CD8-positive, alpha-beta T cell (primary cell): ENCODE measurements at regions of chr7 and their contacts with region 1.

Region 1: DNA sequence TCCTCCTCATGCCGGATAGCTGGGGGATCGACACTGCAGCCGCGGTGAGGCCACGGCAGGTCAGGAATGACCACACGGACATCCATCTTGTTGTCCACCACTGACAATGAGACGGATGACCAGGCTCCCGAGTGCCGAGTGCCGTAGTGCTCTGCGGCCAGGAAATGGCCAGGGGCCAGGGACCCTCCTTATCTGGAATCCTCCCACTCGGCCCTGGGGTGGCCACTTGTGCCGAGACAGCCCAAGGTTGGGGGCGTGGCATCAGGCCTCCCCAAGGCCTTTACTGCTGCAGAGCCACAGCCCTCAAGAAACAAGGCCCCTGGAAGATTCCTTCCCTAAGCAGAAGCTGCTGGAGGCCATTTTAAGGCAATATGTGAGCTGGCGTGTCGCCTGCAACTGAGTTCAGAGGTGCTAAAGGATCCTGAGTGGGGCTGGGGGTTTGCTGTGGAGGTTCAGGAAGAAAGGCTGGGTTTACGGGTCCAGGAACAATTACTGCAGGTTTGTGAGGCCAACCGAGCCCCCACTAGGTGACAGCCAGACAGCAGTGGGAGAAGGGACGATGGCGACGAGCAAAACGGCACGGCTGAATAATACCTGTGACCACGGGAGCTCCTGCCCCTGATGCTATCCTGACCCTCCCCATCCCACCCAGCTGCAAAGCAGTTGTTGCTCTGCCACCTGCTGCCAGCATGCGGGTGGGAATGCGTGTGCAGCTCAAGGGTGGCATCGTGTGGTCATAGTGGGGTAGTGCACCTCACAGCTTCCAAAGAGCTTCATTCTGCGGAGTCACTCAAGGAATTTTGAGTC is 31.6 kb upstream of the LEP start:
- DNase-seq: peak; percentile 45 to 84 (median 65)
- ATAC-seq: peak; percentile 98
- H3K4me3 ChIP-seq: no peak overlapping the region
- H3K4me3 Mint-ChIP-seq: no peak overlapping the region
- H3K27ac ChIP-seq: no peak overlapping the region
- H3K27ac Mint-ChIP-seq: no peak overlapping the region
- H3K4me1 ChIP-seq: no peaks in the 10 kb centered on the region
- H3K4me1 Mint-ChIP-seq: no peaks in the 10 kb centered on the region
- H3K27me3 ChIP-seq: no peaks in the 10 kb centered on the region
- H3K27me3 Mint-ChIP-seq: peaks cover 14% of the 10 kb centered on the region
- CTCF ChIP-seq: peak; percentile 93

Region 2: DNA sequence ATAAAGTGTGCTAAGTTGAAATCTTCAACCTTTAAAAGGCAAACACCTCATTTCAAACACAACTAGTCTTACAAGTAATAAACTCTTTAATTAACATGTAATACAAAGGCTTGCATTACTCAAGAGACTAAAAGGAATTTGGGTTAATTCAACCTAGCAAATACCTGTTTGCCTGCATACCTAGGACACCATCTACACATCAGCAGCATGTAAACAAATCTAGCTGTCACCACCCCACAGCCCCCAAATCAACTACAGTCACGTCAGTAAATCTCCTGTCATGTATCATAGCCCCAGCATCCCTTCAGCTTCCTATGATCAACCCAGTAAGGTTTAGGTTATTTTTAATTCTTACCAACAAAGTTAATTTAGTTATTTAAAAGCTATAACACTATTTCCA is 850.4 kb before region 1 on chr7:
- CTCF ChIA-PET with region 1: no interaction called
- POLR2A ChIA-PET with region 1: no interaction called
- intact Hi-C with region 1: loop called in 1 of 2 experiments (anchors 10 kb)
- DNase-seq: no peak
- ATAC-seq: no peak
- H3K4me3 ChIP-seq: no peak overlapping the region
- H3K4me3 Mint-ChIP-seq: no peak overlapping the region
- H3K27ac ChIP-seq: no peak overlapping the region
- H3K27ac Mint-ChIP-seq: peak overlapping the region; percentile 47
- H3K4me1 ChIP-seq: no peaks in the 10 kb centered on the region
- H3K4me1 Mint-ChIP-seq: peaks cover 21% of the 10 kb centered on the region
- H3K27me3 ChIP-seq: no peaks in the 10 kb centered on the region
- H3K27me3 Mint-ChIP-seq: no peaks in the 10 kb centered on the region
- CTCF ChIP-seq: no peak

Region 3: DNA sequence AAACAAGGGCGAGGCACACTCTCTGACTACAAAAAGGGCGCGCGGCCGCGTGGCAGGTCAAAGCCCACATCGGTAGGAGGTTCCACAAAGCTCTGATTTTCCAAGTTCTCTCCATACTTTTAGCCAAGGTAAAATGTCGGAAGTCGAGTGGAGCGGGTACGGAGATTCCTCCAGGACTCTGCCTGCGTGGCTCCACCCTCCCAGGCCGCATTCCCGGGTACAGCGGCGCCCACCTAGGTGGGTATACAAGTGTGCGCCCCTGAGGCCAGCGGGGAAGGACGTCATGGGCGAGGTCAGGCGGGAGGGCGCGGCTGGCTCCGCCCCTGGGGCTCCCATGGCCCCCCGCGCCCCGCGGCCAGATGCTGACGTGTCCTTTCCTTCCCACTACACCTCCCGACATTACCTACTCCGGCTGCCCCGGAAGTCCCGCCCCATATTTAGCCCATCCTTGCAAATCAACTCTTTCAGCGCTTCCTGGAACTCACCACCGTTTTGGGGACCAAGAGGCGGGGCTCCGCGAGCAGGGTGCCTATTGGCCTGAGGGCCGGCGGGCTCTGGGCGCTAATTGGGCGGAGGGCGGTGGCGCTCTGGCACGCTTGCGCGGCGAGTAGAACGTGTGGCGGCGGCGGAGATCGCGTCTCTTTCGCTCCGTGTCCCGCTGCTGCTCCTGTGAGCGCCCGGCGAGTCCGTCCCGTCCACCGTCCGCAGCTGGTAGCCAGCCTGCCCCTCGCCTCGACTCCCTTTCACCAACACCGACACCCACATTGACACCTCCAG is 557.7 kb before region 1 on chr7 and contains the start of gene SND1:
- CTCF ChIA-PET with region 1: no interaction called
- POLR2A ChIA-PET with region 1: no interaction called
- intact Hi-C with region 1: loop called in 1 of 2 experiments (anchors 1 kb)
- DNase-seq: peak; percentile 96 to 100 (median 98)
- ATAC-seq: peak; percentile 94
- H3K4me3 ChIP-seq: peak within 1 kb of the TSS; percentile 82 to 98
- H3K4me3 Mint-ChIP-seq: peak within 1 kb of the TSS; percentile 98
- H3K27ac ChIP-seq: peak within 1 kb of the TSS; percentile 92 to 98
- H3K27ac Mint-ChIP-seq: peak within 1 kb of the TSS; percentile 99
- H3K4me1 ChIP-seq: peaks cover 35% of the 10 kb centered on the region
- H3K4me1 Mint-ChIP-seq: peaks cover 50% of the 10 kb centered on the region
- H3K27me3 ChIP-seq: no peaks in the 10 kb centered on the region
- H3K27me3 Mint-ChIP-seq: no peaks in the 10 kb centered on the region
- CTCF ChIP-seq: no peak
- total RNA-seq, gene SND1: 87.7 to 101 TPM

Region 4: GRCh38 chr7:127717502-127718339 is 491.7 kb before region 1 on chr7:
- CTCF ChIA-PET with region 1: interaction called, 306 read pairs
- POLR2A ChIA-PET with region 1: interaction called, 4 read pairs
- intact Hi-C with region 1: no loop called
- DNase-seq: no peak
- ATAC-seq: no peak
- H3K4me3 ChIP-seq: no peak overlapping the region
- H3K4me3 Mint-ChIP-seq: no peak overlapping the region
- H3K27ac ChIP-seq: no peak overlapping the region
- H3K27ac Mint-ChIP-seq: no peak overlapping the region
- H3K4me1 ChIP-seq: no peaks in the 10 kb centered on the region
- H3K4me1 Mint-ChIP-seq: peaks cover 20% of the 10 kb centered on the region
- H3K27me3 ChIP-seq: no peaks in the 10 kb centered on the region
- H3K27me3 Mint-ChIP-seq: no peaks in the 10 kb centered on the region
- CTCF ChIP-seq: no peak

Region 5: GRCh38 chr7:128045766-128046165 is 163.7 kb before region 1 on chr7:
- CTCF ChIA-PET with region 1: interaction called, 11 read pairs
- POLR2A ChIA-PET with region 1: no interaction called
- intact Hi-C with region 1: no loop called
- DNase-seq: no peak
- ATAC-seq: no peak
- H3K4me3 ChIP-seq: no peak overlapping the region
- H3K4me3 Mint-ChIP-seq: no peak overlapping the region
- H3K27ac ChIP-seq: no peak overlapping the region
- H3K27ac Mint-ChIP-seq: no peak overlapping the region
- H3K4me1 ChIP-seq: no peaks in the 10 kb centered on the region
- H3K4me1 Mint-ChIP-seq: peaks cover 31% of the 10 kb centered on the region
- H3K27me3 ChIP-seq: no peaks in the 10 kb centered on the region
- H3K27me3 Mint-ChIP-seq: no peaks in the 10 kb centered on the region
- CTCF ChIP-seq: no peak

Region 6: GRCh38 chr7:128221929-128222403 is 12.5 kb after region 1 on chr7:
- CTCF ChIA-PET with region 1: interaction called, 35 read pairs
- POLR2A ChIA-PET with region 1: no interaction called
- intact Hi-C with region 1: no loop called
- DNase-seq: no peak
- ATAC-seq: no peak
- H3K4me3 ChIP-seq: no peak overlapping the region
- H3K4me3 Mint-ChIP-seq: no peak overlapping the region
- H3K27ac ChIP-seq: no peak overlapping the region
- H3K27ac Mint-ChIP-seq: no peak overlapping the region
- H3K4me1 ChIP-seq: no peaks in the 10 kb centered on the region
- H3K4me1 Mint-ChIP-seq: no peaks in the 10 kb centered on the region
- H3K27me3 ChIP-seq: peaks cover 0 to 3% of the 10 kb centered on the region in 2 experiments
- H3K27me3 Mint-ChIP-seq: peaks cover 8% of the 10 kb centered on the region
- CTCF ChIP-seq: no peak